Sciatic nerve (tissue), 2 donors: ENCODE measurements at regions of chr11 and their contacts with region 1.

Region 1: DNA sequence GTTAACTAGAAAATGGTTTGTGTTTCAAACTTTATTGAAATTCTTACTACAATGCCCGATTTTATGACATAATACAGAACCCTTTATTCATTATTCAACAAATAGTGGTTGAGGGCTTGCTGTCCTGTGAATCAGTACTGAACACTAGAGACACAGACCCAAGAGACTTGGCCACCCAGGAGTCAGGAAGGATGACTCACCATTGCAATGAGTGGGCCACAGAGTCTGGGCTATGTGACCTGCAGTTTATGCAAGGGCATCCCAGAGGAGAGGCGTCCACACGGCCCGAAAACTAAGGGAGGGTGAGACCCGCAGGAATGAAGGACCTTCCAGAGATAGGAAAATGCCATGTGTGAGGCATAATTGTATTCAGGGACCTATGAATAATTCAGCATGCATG is 143.8 kb upstream of the DDI1 start:
- DNase-seq: no peak
- ATAC-seq: no peak

Region 2: GRCh38 chr11:102309621-102310541 is 1582.7 kb before region 1 on chr11:
- intact Hi-C with region 1: loop called (anchors 5 kb)
- DNase-seq: no peak
- ATAC-seq: no peak

Region 3: GRCh38 chr11:103798026-103798425 is 94.6 kb before region 1 on chr11:
- intact Hi-C with region 1: no loop called
- DNase-seq: no peak
- ATAC-seq: no peak

Region 4: DNA sequence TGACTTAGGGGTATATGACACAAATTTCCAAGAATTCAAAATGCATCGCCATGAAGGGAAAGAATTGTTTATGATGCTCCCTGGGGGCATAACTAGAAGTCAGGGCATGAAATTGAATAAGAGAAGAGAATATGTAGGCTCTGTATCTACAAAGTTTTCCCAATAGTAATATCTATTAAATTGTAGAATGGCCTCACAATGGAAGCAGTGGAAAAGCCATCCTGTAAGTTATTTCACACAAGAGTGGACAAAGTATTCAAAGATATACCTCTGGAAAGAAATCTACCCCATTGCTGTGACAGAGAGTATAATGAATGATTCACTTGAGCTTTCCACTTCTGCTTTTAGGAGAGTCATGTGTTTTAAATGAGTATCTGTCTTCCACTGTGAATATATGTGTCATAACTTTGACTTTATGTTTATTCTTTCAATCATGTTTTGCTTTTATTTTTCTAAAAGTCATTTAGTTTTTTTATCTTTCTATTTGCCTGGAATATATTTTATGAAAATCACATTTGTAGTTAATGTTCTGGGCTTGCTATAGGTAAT is 78.2 kb after region 1 on chr11:
- intact Hi-C with region 1: no loop called
- DNase-seq: no peak
- ATAC-seq: no peak

Region 5: DNA sequence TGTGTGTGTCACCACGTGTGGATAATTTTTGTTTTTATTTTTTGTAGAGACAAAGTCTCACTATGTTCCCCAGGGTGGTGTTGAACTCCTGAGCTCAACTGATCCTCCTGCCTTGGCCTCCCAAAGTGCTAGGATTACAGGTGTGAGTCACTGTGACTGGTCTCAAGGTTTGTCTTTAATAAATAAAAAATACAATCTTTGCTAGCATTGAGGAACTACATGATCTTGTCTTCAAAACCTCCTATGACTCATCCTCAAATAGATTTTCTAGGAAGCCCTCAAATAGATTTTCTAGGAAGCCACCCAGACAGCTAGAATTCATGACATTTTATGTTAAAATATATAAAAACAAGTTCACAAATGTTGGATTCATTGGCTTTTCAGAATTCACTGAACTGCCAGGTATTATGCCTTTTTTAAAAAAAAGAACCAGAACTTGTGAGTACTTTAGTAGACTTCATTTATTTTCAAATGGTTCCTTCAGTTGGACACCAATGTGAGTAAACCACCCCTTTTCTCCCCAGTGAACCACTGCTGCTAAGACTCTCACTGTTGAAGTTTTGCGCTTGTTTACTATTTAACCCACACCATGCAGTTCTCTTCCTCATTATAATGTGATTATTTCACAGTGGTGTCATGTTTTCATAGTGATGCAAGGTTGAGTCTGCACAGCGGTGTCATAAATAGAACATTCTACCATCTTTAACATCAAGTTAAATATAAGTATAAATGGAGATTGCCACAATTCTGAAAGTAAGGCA is 701.8 kb after region 1 on chr11:
- intact Hi-C with region 1: no loop called
- DNase-seq: no peak
- ATAC-seq: no peak